HepG2 (cell line): ENCODE measurements at regions of chr2 and their contacts with region 1.

Region 1: DNA sequence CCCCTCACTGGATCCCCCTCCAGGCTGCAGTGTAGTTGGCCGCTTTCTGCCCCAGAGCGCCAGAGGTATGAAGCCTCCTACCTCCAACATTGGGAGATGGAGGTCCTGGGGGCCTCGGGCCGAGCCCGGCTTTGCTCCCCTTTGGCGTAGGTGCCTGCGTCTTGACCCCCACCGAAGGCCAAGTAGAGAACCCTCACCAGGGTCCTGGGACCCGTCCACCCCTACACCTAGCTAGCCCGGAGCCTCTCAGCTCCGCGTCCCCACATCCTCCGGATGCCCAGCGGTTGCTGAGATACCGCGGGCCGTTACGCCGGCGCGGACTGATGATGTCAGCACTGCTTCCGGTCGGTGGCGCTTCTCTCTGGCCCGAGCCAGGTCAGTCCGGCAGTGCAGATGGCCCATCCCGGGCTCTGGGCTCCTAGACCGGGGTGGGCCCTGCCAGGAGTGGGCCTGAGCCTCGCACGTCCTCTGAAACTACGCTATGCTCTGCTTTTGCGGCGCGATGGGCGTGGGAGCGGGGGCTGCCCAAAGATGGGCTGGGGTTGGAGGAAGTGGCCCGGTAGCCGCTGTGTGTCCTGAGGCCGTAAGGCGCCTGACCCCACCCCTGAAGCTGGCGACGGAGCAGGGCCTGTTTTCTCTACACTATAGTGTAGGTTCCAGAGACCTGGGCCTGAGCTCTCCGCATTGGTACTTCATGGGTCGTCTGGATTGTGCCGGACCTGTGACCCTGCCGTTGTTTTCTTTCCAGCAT is at the starts of genes GLB1L and STK16:
- DNase-seq: peak; percentile 89
- ATAC-seq: peak; percentile 81
- H3K4me3 ChIP-seq: peak within 1 kb of the TSS; percentile 88 to 97 (median 93)
- H3K27ac ChIP-seq: peak within 1 kb of the TSS; percentile 72
- H3K4me1 ChIP-seq: peaks cover 53% of the 10 kb centered on the region
- H3K27me3 ChIP-seq: no peaks in the 10 kb centered on the region; a peak in 1 of 5 replicates
- CTCF ChIP-seq: no peak; the same call in 1 of the 2 replicates
- EP300 ChIP-seq: no peak
- POLR2A ChIP-seq: peak in 1 of 2 experiments; percentile 91; a peak in 2 of 4 replicates
- RAD21 ChIP-seq: peak; percentile 44
- total RNA-seq, gene GLB1L: 2.7 and 6.8 TPM in 2 replicates
- total RNA-seq, gene STK16: 27.0 and 28.0 TPM in 2 replicates

Region 2: DNA sequence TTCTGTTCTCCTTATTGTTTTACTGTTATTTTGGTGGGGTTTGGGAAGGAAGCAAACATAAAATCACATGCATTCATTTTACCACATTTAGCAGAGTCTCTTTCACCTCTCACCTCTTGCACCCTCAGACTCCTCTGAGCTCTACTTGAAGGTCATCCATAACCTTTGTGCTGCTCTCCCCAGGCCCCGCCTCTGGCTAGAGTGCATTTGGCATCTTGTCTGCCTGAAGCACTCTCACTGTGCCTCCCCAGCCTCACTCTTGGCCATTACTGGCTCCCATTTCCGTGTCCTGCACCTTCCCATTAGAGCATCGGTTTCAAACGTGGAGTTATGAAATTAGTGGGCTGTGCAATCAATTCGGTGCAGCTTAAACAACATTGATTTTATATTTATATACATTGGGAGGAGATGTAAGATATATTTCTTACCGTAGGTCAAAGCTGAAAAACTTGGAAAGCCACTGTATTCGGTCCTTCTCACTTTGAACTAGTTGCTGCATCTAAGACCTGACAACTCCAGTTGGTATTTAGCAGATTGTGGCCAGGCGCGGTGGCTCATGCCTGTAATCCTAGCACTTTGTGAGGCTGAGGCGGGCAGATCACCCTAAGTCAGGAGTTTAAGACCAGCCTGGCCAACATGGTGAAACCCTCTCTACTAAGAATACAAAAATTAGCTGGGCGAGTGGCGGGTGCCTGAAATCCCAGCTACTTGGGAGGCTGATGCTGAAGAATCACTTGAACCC is 45.7 kb before region 1 on chr2:
- CTCF ChIA-PET with region 1: no interaction called
- POLR2A ChIA-PET with region 1: interaction called, 15 read pairs
- in situ Hi-C with region 1: no loop called
- intact Hi-C with region 1: no loop called
- DNase-seq: no peak
- ATAC-seq: peak; percentile 39
- H3K4me3 ChIP-seq: no peak overlapping the region
- H3K27ac ChIP-seq: peak overlapping the region; percentile 25
- H3K4me1 ChIP-seq: peaks cover 33% of the 10 kb centered on the region
- H3K27me3 ChIP-seq: no peaks in the 10 kb centered on the region
- CTCF ChIP-seq: no peak
- EP300 ChIP-seq: no peak
- POLR2A ChIP-seq: no peak; a peak in 2 of 4 replicates
- RAD21 ChIP-seq: no peak

Region 3: DNA sequence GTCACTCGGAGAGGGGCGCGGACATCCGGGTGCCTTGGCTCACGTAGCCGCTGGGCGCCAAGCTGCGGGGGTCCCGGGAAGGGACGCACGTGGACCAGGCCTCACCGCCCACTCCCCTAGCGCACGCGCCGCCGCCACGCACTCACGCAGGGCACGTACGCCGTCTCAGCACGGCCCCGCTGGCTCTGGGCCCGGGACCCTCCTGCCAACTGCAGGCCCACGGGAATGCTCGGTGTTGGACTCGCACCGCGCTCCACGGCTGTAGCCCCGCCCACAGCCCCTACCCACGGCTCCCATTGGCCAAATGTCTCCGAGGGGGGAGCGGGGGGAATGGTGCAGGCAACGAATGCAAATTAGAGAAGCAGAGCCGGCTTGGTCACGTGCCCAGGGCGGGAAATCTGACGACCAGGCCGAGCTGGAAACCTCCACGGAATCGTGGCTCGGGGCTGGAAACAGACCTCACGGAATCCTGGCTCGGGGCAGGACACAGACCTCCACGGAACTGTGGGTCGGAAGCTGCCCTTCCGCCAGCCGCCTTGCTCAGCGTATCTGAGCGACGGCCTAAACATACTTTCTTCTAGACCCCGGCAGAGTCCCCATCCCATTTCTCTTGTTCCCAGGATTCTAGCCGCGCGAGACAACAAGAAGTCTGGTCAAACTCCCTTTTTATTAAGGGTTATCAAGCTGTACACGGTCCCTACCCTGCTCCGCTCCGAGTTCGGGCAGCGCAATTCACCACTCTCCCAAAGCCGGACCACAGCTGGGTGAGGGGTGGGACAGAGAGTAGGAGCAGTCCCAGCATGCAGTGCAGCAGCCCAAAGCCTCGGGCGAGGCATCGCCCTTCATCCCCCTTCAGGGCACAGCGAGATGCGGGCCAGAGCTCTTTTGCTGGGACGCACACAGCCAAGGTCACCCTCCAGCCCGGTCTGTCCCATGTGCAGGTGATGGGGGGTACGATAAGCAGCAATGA is 26.3 kb before region 1 on chr2 and contains the start of gene ABCB6:
- CTCF ChIA-PET with region 1: no interaction called
- POLR2A ChIA-PET with region 1: interaction called, 65 read pairs
- in situ Hi-C with region 1: no loop called
- intact Hi-C with region 1: no loop called
- DNase-seq: peak; percentile 93
- ATAC-seq: peak; percentile 79
- H3K4me3 ChIP-seq: peak within 1 kb of the TSS; percentile 80 to 92 (median 85)
- H3K27ac ChIP-seq: peak within 1 kb of the TSS; percentile 92
- H3K4me1 ChIP-seq: peaks cover 43% of the 10 kb centered on the region
- H3K27me3 ChIP-seq: no peaks in the 10 kb centered on the region
- CTCF ChIP-seq: 0 out of 2 replicates have a peak, but pooled peaks have one; percentile 20
- EP300 ChIP-seq: no peak; a peak in 1 of 4 replicates
- POLR2A ChIP-seq: peak in 1 of 2 experiments; percentile 94; a peak in 2 of 4 replicates
- RAD21 ChIP-seq: no peak
- total RNA-seq, gene ABCB6: 51.3 and 137 TPM in 2 replicates

Region 4: DNA sequence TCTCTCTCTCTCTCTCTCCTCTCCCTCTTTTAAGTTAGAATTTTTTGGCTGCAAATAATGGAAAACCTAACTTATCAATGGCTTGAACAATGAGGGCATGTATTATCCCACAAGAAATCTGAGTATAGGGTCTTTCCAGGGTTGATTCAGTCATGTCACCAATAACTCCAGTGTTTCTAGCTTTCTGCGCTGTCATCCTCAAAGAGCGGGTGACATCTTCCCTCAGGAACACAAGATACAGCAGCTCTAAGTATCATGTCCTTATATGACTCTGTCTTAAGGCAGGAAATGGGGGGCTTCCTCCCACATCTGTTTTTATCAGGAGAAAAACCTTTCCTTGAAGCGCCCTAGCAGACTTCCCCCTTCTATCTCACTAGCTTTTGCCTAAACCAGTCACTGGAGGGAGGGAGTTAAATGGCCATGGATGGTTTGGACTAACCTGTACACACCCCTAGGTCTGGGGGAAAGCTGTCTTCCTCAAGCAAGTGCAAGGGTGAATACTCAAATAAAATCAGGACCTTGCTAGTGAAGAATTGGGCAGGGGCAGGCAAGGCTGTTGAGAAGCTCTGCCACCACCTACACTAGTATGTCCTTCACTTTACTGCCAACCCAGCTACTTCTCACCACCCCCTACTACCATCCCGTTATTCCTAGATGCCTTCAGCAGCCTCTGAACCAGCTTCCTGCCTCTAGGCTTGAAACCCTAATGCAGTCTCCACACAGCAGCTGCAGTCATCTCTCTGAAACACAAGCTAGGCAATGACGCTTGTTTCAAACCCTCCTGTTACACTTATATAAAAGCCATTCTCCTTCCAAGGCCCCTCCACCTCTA is 15.9 kb after region 1 on chr2:
- CTCF ChIA-PET with region 1: no interaction called
- POLR2A ChIA-PET with region 1: interaction called, 26 read pairs
- in situ Hi-C with region 1: no loop called
- intact Hi-C with region 1: no loop called
- DNase-seq: no peak
- ATAC-seq: peak; percentile 39; the same call in 2 of the 3 replicates
- H3K4me3 ChIP-seq: no peak overlapping the region
- H3K27ac ChIP-seq: no peak overlapping the region
- H3K4me1 ChIP-seq: peaks cover 9% of the 10 kb centered on the region; the same call in 1 of the 2 replicates
- H3K27me3 ChIP-seq: peaks cover 2 to 38% of the 10 kb centered on the region in 2 experiments; a peak in 4 of 5 replicates
- CTCF ChIP-seq: no peak
- EP300 ChIP-seq: no peak
- POLR2A ChIP-seq: no peak
- RAD21 ChIP-seq: no peak

Region 5: GRCh38 chr2:219278655-219279516 is 33.6 kb after region 1 on chr2 and contains the start of gene DNAJB2:
- CTCF ChIA-PET with region 1: no interaction called
- POLR2A ChIA-PET with region 1: interaction called, 70 read pairs
- in situ Hi-C with region 1: no loop called
- intact Hi-C with region 1: loop called (anchors 1 kb)
- DNase-seq: peak; percentile 93
- ATAC-seq: peak; percentile 92
- H3K4me3 ChIP-seq: peak within 1 kb of the TSS; percentile 59 to 77 (median 73)
- H3K27ac ChIP-seq: peak within 1 kb of the TSS; percentile 62
- H3K4me1 ChIP-seq: peaks cover 37% of the 10 kb centered on the region
- H3K27me3 ChIP-seq: 0 out of 5 replicates have a peak, but pooled peaks cover 0 to 5% of the 10 kb centered on the region in 2 experiments
- CTCF ChIP-seq: no peak; the same call in 1 of the 2 replicates
- EP300 ChIP-seq: no peak; a peak in 1 of 4 replicates
- POLR2A ChIP-seq: peak; percentile 52 to 79; a peak in 3 of 4 replicates
- RAD21 ChIP-seq: no peak
- total RNA-seq, gene DNAJB2: 18.6 and 21.3 TPM in 2 replicates

Region 6: GRCh38 chr2:219388127-219388844 is 143.0 kb after region 1 on chr2:
- CTCF ChIA-PET with region 1: no interaction called
- POLR2A ChIA-PET with region 1: interaction called, 18 read pairs
- in situ Hi-C with region 1: no loop called
- intact Hi-C with region 1: no loop called
- DNase-seq: peak; percentile 87
- ATAC-seq: peak; percentile 74
- H3K4me3 ChIP-seq: peak overlapping the region; percentile 53 to 70 (median 68)
- H3K27ac ChIP-seq: peak overlapping the region; percentile 68
- H3K4me1 ChIP-seq: peaks cover 30% of the 10 kb centered on the region
- H3K27me3 ChIP-seq: no peaks in the 10 kb centered on the region; a peak in 1 of 5 replicates
- CTCF ChIP-seq: peak; percentile 78
- EP300 ChIP-seq: peak in 1 of 2 experiments; percentile 12; a peak in 1 of 4 replicates
- POLR2A ChIP-seq: peak; percentile 52 to 68; a peak in 3 of 4 replicates
- RAD21 ChIP-seq: peak; percentile 67; the same call in 1 of the 2 replicates